Motor neuron (in vitro differentiated cells): ENCODE measurements at regions of chr7 and their contacts with region 1.

Region 1: GRCh38 chr7:33932832-33933468 is 27.6 kb downstream of the BMPER start:
- ATAC-seq: peak; percentile 84 to 98 (median 92)
- H3K4me3 ChIP-seq: no peak overlapping the region
- H3K27ac ChIP-seq: no peak overlapping the region
- H3K4me1 ChIP-seq: no peaks in the 10 kb centered on the region

Region 2: GRCh38 chr7:33243319-33243881 is 689.5 kb before region 1 on chr7:
- in situ Hi-C with region 1: loop called in 3 of 9 experiments (anchors 10 to 25 kb)
- ATAC-seq: peak in 7 of 8 experiments; percentile 43 to 75 (median 62)
- H3K4me3 ChIP-seq: no peak overlapping the region
- H3K27ac ChIP-seq: no peak overlapping the region
- H3K4me1 ChIP-seq: no peaks in the 10 kb centered on the region

Region 3: DNA sequence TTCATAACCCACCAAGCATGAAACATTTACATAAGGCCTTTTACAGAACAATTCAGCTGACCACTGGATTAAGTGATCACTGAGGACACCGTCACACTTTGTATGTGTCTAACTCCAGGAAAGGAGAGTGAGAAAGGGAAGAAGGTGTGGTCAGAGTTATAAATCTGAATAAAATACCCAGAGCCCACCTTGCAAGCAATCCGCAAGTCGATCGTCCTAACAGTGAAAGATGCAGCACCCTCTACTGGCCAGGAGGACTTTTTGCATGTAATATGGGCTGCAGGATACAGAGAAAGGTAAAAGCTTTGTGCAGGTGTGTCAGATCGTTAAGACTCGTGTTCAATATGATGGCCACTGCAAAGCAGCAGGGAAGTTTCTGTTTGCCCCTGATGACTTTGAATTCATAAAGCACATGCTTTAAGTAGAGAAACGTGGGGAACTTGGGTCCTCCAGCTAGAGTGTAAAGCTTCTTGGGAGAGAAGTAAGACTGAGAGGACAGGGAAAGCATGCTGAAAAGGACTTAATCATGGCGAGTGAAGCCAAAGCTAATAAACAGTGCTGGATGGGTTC is 96.1 kb before region 1 on chr7:
- in situ Hi-C with region 1: no loop called
- ATAC-seq: no peak
- H3K4me3 ChIP-seq: no peak overlapping the region
- H3K27ac ChIP-seq: no peak overlapping the region
- H3K4me1 ChIP-seq: no peaks in the 10 kb centered on the region

Region 4: DNA sequence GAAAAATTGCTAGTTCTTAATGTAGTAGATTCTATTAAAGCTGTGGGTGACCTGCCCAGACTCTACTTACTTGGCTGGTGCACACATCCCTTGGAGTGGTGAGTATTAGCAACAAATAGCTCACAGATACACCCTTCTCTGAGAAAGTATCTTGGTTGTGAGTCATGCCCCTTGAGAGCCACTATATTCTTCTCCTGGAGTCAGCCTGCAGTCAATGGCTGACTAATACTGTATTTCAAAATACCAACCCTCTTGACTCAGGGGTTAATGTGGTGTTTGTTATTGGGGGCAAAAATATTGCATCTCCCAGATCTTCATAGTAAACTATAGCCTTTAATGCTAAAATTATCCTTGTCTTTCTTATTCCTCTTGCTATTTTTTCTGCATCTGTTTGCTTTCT is 327.3 kb after region 1 on chr7:
- in situ Hi-C with region 1: no loop called
- ATAC-seq: peak in 7 of 8 experiments; percentile 49 to 100 (median 74)
- H3K4me3 ChIP-seq: no peak overlapping the region
- H3K27ac ChIP-seq: no peak overlapping the region
- H3K4me1 ChIP-seq: no peaks in the 10 kb centered on the region